GM12878 (cell line): ENCODE measurements at regions of chr7 and their contacts with region 1.

Region 1: GRCh38 chr7:2785071-2785500 is 59.0 kb downstream of the GNA12 start:
- DNase-seq: peak; percentile 40
- ATAC-seq: peak; percentile 94
- H3K4me3 ChIP-seq: no peak overlapping the region
- H3K27ac ChIP-seq: no peak overlapping the region
- H3K4me1 ChIP-seq: no peaks in the 10 kb centered on the region
- H3K27me3 ChIP-seq: no peaks in the 10 kb centered on the region
- CTCF ChIP-seq: no peak
- EP300 ChIP-seq: peak; percentile 49 to 74; a peak in 3 of 4 replicates
- POLR2A ChIP-seq: no peak
- RAD21 ChIP-seq: no peak

Region 2: DNA sequence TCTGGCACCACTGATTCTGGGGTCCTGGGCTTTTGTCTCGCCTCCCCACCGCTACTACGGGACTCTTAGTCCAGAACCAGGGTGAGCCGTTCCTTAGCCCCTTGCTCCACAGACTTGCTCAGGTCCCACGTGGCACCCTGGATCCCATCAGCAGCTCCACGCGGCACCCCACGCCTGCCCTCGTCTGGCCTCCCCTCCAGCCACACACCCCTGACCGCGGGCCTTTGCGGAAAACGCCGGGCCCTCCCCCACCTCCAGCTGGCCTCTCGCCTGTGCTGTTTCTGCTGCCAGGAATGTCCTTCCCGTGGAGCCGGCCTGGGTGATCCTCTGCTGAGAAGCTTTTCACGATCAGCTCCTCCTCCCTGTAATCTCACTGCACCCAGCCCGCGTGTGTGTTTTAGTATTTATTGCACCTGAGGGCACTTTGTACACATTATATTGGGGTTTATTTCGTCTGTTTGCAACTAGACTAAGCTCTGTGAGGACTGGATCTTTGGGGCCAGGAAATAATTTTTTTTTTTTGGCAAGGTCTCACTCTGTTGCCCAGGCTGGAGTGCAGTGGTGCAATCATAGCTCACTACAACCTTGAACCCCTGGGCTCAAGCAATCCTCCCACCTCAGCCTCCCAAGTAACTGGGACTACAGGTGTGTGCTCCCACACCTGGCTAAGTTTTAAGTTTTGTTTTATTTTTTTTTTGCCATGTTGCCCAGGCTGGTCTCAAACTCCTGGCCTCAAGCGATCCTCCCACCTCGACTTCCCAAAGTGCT is 163.8 kb before region 1 on chr7:
- CTCF ChIA-PET with region 1: no interaction called
- POLR2A ChIA-PET with region 1: no interaction called
- RAD21 ChIA-PET with region 1: no interaction called
- SMC1A ChIA-PET with region 1: no interaction called
- in situ Hi-C with region 1: no loop called
- intact Hi-C with region 1: no loop called
- DNase-seq: no peak
- ATAC-seq: no peak
- H3K4me3 ChIP-seq: no peak overlapping the region
- H3K27ac ChIP-seq: no peak overlapping the region
- H3K4me1 ChIP-seq: no peaks in the 10 kb centered on the region
- H3K27me3 ChIP-seq: no peaks in the 10 kb centered on the region
- CTCF ChIP-seq: no peak
- EP300 ChIP-seq: no peak
- POLR2A ChIP-seq: no peak
- RAD21 ChIP-seq: no peak

Region 3: GRCh38 chr7:2771274-2771731 is 13.8 kb before region 1 on chr7:
- CTCF ChIA-PET with region 1: interaction called, 3 read pairs
- POLR2A ChIA-PET with region 1: interaction called, 8 read pairs
- RAD21 ChIA-PET with region 1: interaction called, 6 read pairs
- SMC1A ChIA-PET with region 1: interaction called, 11 read pairs
- in situ Hi-C with region 1: no loop called
- intact Hi-C with region 1: no loop called
- DNase-seq: no peak
- ATAC-seq: no peak
- H3K4me3 ChIP-seq: no peak overlapping the region
- H3K27ac ChIP-seq: no peak overlapping the region
- H3K4me1 ChIP-seq: peaks cover 10% of the 10 kb centered on the region
- H3K27me3 ChIP-seq: no peaks in the 10 kb centered on the region
- CTCF ChIP-seq: no peak
- EP300 ChIP-seq: no peak
- POLR2A ChIP-seq: no peak
- RAD21 ChIP-seq: no peak

Region 4: DNA sequence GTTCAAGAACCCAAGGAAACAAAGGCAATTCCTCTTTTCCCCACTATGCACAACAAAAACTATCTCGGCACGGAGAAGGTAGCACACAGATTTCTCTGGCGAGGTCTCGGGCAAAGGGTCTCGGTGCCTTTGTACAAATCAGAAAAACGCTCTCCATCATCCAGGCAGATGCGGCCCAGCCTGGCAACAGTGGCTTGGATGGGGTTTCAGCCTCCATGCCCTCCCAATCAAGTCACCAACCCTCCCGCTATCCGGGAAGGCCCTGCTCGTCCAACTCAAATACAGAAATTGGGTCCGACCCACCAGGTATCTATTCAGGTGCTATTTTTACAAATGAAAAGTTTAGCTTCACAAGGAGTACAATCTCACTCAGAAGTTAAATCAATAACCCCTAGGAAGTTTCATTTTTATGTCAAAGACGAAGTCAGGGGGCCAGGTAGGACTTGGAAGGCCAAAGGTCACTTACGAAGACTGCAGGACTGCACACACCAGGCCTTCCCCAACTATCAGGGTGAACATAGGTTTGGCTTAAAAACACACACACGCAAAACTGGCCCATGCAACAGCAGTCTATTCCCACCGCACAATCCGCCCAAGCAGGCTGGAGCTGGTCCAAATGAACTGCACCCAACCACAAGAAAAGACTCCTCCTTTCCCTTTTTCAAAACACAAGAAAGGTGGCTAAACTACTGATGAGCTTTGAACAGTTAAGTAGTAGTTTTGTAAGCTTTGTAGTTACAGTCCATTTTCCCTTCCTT is 16.0 kb after region 1 on chr7:
- CTCF ChIA-PET with region 1: interaction called, 9 read pairs
- POLR2A ChIA-PET with region 1: interaction called, 19 read pairs
- RAD21 ChIA-PET with region 1: interaction called, 7 read pairs
- SMC1A ChIA-PET with region 1: interaction called, 45 read pairs
- in situ Hi-C with region 1: no loop called
- intact Hi-C with region 1: no loop called
- DNase-seq: no peak
- ATAC-seq: peak; percentile 45
- H3K4me3 ChIP-seq: no peak overlapping the region
- H3K27ac ChIP-seq: no peak overlapping the region
- H3K4me1 ChIP-seq: peaks cover 8% of the 10 kb centered on the region; the same call in 1 of the 2 replicates
- H3K27me3 ChIP-seq: no peaks in the 10 kb centered on the region
- CTCF ChIP-seq: no peak
- EP300 ChIP-seq: no peak
- POLR2A ChIP-seq: no peak
- RAD21 ChIP-seq: no peak

Region 5: DNA sequence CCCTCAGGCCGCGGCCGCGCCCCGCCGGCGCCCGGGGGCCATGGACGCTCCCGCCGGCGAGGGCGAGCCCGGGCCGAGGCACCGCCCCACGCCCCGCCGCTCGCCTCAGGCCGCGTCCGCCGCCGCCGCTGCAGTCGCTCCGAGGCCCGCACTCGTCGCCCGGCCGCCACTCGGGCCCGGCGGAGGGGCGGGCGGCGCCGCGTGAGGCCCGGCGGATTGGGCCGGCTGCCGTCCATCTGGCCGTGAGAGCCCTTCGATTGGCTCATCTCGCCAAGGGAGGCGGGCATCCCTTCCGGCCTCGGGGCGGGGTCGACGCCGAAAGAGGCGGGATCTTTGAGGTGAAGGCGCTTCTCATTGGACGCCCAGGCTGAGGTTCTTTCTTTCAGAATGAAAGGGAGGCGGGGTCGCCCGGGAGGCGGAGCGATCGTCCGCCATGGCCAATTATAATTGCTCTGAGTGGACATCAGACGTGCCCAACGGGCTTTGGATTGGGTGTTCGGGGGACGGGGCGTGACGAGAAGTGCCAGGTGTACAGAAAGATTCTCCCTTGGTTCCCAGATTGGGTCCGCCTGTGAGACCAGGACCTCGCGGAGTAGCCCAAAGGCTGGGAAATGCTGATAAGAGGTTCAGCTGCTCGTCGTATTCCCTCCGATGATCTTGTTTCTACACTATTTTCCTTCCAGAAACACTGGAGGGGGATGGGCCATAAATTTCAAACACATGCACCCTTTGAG is 59.2 kb after region 1 on chr7 and contains the start of gene GNA12:
- CTCF ChIA-PET with region 1: interaction called, 3 read pairs
- POLR2A ChIA-PET with region 1: no interaction called
- RAD21 ChIA-PET with region 1: interaction called, 3 read pairs
- SMC1A ChIA-PET with region 1: interaction called, 12 read pairs
- in situ Hi-C with region 1: no loop called
- intact Hi-C with region 1: no loop called
- DNase-seq: peak; percentile 94
- ATAC-seq: peak; percentile 97
- H3K4me3 ChIP-seq: peak within 1 kb of the TSS; percentile 80
- H3K27ac ChIP-seq: peak within 1 kb of the TSS; percentile 33; the same call in 1 of the 2 replicates
- H3K4me1 ChIP-seq: peaks cover 8% of the 10 kb centered on the region
- H3K27me3 ChIP-seq: no peaks in the 10 kb centered on the region
- CTCF ChIP-seq: no peak
- EP300 ChIP-seq: no peak
- POLR2A ChIP-seq: peak; percentile 69
- RAD21 ChIP-seq: no peak
- polyA plus RNA-seq, gene GNA12: 1.9 to 3.0 TPM

Region 6: GRCh38 chr7:2851497-2851896 is 66.4 kb after region 1 on chr7:
- CTCF ChIA-PET with region 1: no interaction called
- POLR2A ChIA-PET with region 1: interaction called, 3 read pairs
- RAD21 ChIA-PET with region 1: interaction called, 3 read pairs
- SMC1A ChIA-PET with region 1: interaction called, 3 read pairs
- in situ Hi-C with region 1: no loop called
- intact Hi-C with region 1: loop called (anchors 2 kb)
- DNase-seq: no peak
- ATAC-seq: peak; percentile 92
- H3K4me3 ChIP-seq: no peak overlapping the region
- H3K27ac ChIP-seq: 0 out of 2 replicates have a peak overlapping the region, but pooled peaks have one; percentile 18
- H3K4me1 ChIP-seq: peaks cover 6% of the 10 kb centered on the region
- H3K27me3 ChIP-seq: no peaks in the 10 kb centered on the region
- CTCF ChIP-seq: no peak
- EP300 ChIP-seq: no peak
- POLR2A ChIP-seq: no peak
- RAD21 ChIP-seq: no peak